HAP-1 (cell line): ENCODE measurements at regions of chr6 and their contacts with region 1.

Region 1: DNA sequence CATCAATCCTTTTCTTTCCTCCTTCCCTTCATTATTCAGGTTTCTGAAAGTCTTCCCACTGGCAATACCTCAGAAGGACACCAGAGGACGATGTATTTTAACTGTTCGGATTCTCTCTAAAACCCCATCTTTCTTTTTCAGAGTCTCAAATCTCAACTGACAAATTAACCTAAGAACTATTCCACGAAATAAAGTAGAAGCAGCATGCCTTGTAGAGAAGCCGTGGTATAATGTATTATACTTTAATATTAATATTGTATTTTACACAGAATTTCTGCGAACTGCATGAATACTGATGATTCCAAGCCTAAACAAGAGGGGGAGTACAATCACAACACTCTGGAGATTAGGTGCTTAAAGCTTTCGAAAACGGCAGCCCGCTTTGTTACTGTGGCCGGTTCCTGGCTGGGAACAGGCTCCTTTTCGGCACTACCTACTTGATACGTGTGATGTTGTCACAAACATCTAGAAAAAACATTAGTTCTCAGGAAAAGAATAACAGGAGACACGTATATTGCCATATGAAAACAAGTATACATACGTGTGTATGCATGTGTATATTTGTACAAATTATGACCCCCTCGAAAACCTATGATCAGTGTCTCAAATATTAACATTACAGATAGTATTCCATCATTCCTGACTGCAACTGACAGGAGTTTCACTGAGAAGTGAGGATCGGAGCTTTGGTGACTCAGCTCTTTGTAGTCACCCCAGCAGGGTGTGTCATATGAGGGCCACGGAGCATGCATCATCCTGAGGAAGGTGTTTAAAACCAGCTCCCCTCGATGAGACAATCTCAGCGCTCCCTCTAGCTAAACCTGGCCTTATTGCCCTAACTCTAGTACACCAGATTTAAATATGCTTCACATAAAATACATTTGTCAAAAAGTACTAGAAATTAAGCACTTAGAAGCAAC is 319.7 kb upstream of the TCF21 start:
- DNase-seq: peak; percentile 44 to 70
- H3K4me3 ChIP-seq: peak overlapping the region; percentile 14
- H3K4me1 ChIP-seq: no peaks in the 10 kb centered on the region
- H3K27me3 ChIP-seq: peaks cover 3% of the 10 kb centered on the region

Region 2: GRCh38 chr6:133184798-133185372 is 384.3 kb before region 1 on chr6:
- in situ Hi-C with region 1: loop called (anchors 25 kb)
- DNase-seq: peak in 1 of 2 experiments; percentile 18
- H3K4me3 ChIP-seq: no peak overlapping the region
- H3K4me1 ChIP-seq: no peaks in the 10 kb centered on the region; the same call in 1 of the 2 replicates
- H3K27me3 ChIP-seq: no peaks in the 10 kb centered on the region

Region 3: GRCh38 chr6:133410628-133411027 is 158.6 kb before region 1 on chr6:
- in situ Hi-C with region 1: no loop called
- DNase-seq: no peak
- H3K4me3 ChIP-seq: no peak overlapping the region
- H3K4me1 ChIP-seq: peaks cover 49% of the 10 kb centered on the region
- H3K27me3 ChIP-seq: no peaks in the 10 kb centered on the region

Region 4: GRCh38 chr6:133467231-133467981 is 101.8 kb before region 1 on chr6:
- in situ Hi-C with region 1: no loop called
- DNase-seq: no peak
- H3K4me3 ChIP-seq: no peak overlapping the region
- H3K4me1 ChIP-seq: peaks cover 18% of the 10 kb centered on the region
- H3K27me3 ChIP-seq: no peaks in the 10 kb centered on the region

Region 5: DNA sequence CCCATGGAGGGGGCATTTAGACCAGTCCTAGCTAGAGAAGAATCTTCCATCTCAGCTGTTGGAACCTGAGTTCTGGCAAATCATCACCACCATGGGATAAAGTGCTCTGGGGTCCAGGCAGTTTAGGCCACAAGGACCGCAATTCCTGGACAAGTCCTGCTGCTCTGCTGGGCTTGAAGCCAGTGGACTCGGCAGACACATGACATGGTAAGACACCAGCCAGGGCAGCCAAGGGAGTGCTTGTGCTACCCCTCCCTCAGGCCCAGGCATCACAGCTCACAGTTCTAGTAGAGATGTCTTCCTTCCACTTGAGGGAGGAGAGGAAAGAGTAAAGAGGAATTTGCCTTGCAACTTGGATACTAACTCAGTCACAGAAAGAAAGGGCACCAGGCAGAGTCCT is 82.1 kb before region 1 on chr6:
- in situ Hi-C with region 1: no loop called
- DNase-seq: no peak
- H3K4me3 ChIP-seq: no peak overlapping the region
- H3K4me1 ChIP-seq: no peaks in the 10 kb centered on the region
- H3K27me3 ChIP-seq: no peaks in the 10 kb centered on the region

Region 6: GRCh38 chr6:133787859-133788505 is 218.8 kb after region 1 on chr6:
- in situ Hi-C with region 1: no loop called
- DNase-seq: no peak
- H3K4me3 ChIP-seq: no peak overlapping the region
- H3K4me1 ChIP-seq: no peaks in the 10 kb centered on the region
- H3K27me3 ChIP-seq: 0 out of 2 replicates have a peak, but pooled peaks cover 5% of the 10 kb centered on the region

Region 7: GRCh38 chr6:133906050-133906449 is 336.8 kb after region 1 on chr6:
- in situ Hi-C with region 1: loop called (anchors 10 kb)
- DNase-seq: no peak
- H3K4me3 ChIP-seq: no peak overlapping the region
- H3K4me1 ChIP-seq: no peaks in the 10 kb centered on the region
- H3K27me3 ChIP-seq: peaks cover 33% of the 10 kb centered on the region

Region 8: GRCh38 chr6:134097114-134097707 is 528.0 kb after region 1 on chr6:
- in situ Hi-C with region 1: loop called (anchors 25 kb)
- DNase-seq: peak; percentile 56 to 82
- H3K4me3 ChIP-seq: no peak overlapping the region
- H3K4me1 ChIP-seq: no peaks in the 10 kb centered on the region; the same call in 1 of the 2 replicates
- H3K27me3 ChIP-seq: no peaks in the 10 kb centered on the region